Activated CD4-positive, alpha-beta T cell treated with anti-CD3 and anti-CD28 coated beads, Interleukin-2, amount 10 ng/mL, durations not matched to agents 24 days and 14 days (primary cell): ENCODE measurements at regions of chr14 and their contacts with region 1.

Region 1: DNA sequence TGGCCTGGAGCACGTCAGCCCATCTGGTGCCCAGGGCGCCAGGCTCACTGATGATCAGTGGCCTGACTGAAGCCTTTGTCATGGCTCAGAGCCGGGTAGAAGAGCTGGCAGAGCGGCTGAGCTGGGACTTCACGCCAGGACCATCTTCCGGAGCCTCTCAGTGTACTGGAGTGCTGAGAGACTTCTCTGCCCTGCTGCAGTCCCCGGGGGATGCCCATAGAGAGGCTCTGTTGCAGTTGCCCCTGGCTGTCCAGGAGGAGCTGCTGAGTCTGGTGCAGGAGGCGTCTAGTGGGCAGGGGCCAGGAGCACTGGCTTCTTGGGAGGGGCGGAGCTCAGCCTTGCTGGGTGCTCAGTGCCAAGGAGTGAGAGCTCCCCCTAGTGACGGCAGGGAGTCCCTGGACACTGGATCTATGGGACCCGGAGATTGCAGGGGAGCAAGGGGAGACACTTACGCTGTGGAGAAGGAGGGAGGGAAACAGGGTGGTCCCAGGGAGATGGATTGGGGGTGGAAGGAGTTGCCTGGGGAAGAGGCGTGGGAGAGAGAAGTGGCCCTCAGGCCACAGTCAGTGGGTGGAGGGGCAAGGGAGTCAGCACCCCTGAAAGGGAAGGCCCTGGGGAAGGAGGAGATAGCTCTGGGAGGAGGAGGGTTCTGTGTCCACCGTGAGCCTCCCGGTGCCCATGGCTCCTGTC is 2.0 kb downstream of the KHNYN start:
- DNase-seq: peak; percentile 97
- H3K4me3 Mint-ChIP-seq: peak overlapping the region; percentile 92
- H3K27ac Mint-ChIP-seq: peak overlapping the region; percentile 94
- H3K4me1 Mint-ChIP-seq: peaks cover 45% of the 10 kb centered on the region
- H3K27me3 Mint-ChIP-seq: no peaks in the 10 kb centered on the region

Region 2: GRCh38 chr14:24310646-24311604 is 120.8 kb before region 1 on chr14 and contains the start of gene LTB4R:
- intact Hi-C with region 1: loop called (anchors 1 kb)
- DNase-seq: peak; percentile 89
- H3K4me3 Mint-ChIP-seq: peak within 1 kb of the TSS; percentile 86
- H3K27ac Mint-ChIP-seq: peak within 1 kb of the TSS; percentile 91
- H3K4me1 Mint-ChIP-seq: peaks cover 68% of the 10 kb centered on the region
- H3K27me3 Mint-ChIP-seq: no peaks in the 10 kb centered on the region
- total RNA-seq, gene LTB4R: 12.2 and 14.2 TPM in 2 replicates

Region 3: GRCh38 chr14:24332268-24332993 is 99.3 kb before region 1 on chr14:
- intact Hi-C with region 1: loop called (anchors 1 kb)
- DNase-seq: peak; percentile 95
- H3K4me3 Mint-ChIP-seq: peak overlapping the region; percentile 87
- H3K27ac Mint-ChIP-seq: peak overlapping the region; percentile 26
- H3K4me1 Mint-ChIP-seq: peaks cover 51% of the 10 kb centered on the region
- H3K27me3 Mint-ChIP-seq: peaks cover 33% of the 10 kb centered on the region

Region 4: GRCh38 chr14:24456980-24457379 is 25.3 kb after region 1 on chr14:
- intact Hi-C with region 1: no loop called
- DNase-seq: no peak
- H3K4me3 Mint-ChIP-seq: no peak overlapping the region
- H3K27ac Mint-ChIP-seq: no peak overlapping the region
- H3K4me1 Mint-ChIP-seq: no peaks in the 10 kb centered on the region
- H3K27me3 Mint-ChIP-seq: no peaks in the 10 kb centered on the region

Region 5: DNA sequence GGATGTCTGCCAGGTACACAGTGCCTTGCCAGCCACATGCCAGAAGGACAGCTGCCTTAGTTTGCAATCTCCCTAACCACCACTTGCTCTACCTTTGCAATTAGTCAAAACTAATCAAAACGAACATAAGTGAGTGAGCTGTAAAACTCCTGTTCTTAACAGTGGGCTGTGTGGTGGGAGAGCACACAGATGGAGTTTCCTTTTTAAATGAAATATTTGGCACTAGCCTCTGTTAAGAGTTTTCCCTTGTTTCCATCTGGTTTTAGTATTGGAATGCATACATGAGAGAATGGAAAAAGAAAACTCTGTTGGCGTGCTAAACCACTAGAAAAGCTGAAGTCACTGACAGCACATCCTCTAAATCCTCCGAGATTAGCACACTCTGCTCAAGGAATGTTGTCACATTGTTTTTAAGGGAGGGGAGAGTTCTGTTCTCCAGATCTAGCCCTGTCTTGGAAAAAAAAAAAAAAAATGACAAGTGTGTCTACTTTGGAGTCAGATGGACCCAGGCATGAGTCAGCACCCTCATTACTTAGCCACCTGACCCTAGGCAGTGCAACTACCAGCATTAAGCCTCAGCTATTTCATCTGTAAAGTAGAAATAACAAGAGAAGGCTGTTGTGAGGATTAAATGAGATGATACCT is 534.3 kb after region 1 on chr14:
- intact Hi-C with region 1: no loop called
- DNase-seq: no peak
- H3K4me3 Mint-ChIP-seq: no peak overlapping the region
- H3K27ac Mint-ChIP-seq: no peak overlapping the region
- H3K4me1 Mint-ChIP-seq: no peaks in the 10 kb centered on the region
- H3K27me3 Mint-ChIP-seq: peaks cover 2% of the 10 kb centered on the region